ENCODE measurements at regions of chr5 and their contacts with region 1.

Region 1: GRCh38 chr5:112707187-112708102 is 30.2 kb upstream of the APC start:
- DNase-seq: peak; percentile 98 to 99
- H3K4me3 ChIP-seq: peak overlapping the region; percentile 81
- H3K4me3 Mint-ChIP-seq: peak overlapping the region; percentile 99
- H3K27ac Mint-ChIP-seq: peak overlapping the region; percentile 79
- H3K4me1 ChIP-seq: peaks cover 20% of the 10 kb centered on the region
- H3K4me1 Mint-ChIP-seq: peaks cover 33% of the 10 kb centered on the region
- H3K27me3 ChIP-seq: no peaks in the 10 kb centered on the region
- H3K27me3 Mint-ChIP-seq: peaks cover 3% of the 10 kb centered on the region
- CTCF ChIP-seq: peak in 1 of 2 experiments; percentile 8

Region 2: GRCh38 chr5:112968411-112969106 is 261.1 kb after region 1 on chr5:
- CTCF ChIA-PET with region 1: no interaction called
- POLR2A ChIA-PET with region 1: no interaction called
- intact Hi-C with region 1: loop called (anchors 5 kb)
- DNase-seq: peak; percentile 58 to 77
- H3K4me3 ChIP-seq: no peak overlapping the region
- H3K4me3 Mint-ChIP-seq: peak overlapping the region; percentile 65
- H3K27ac Mint-ChIP-seq: peak overlapping the region; percentile 94
- H3K4me1 ChIP-seq: peaks cover 56% of the 10 kb centered on the region
- H3K4me1 Mint-ChIP-seq: peaks cover 35% of the 10 kb centered on the region
- H3K27me3 ChIP-seq: no peaks in the 10 kb centered on the region
- H3K27me3 Mint-ChIP-seq: no peaks in the 10 kb centered on the region
- CTCF ChIP-seq: no peak

Region 3: DNA sequence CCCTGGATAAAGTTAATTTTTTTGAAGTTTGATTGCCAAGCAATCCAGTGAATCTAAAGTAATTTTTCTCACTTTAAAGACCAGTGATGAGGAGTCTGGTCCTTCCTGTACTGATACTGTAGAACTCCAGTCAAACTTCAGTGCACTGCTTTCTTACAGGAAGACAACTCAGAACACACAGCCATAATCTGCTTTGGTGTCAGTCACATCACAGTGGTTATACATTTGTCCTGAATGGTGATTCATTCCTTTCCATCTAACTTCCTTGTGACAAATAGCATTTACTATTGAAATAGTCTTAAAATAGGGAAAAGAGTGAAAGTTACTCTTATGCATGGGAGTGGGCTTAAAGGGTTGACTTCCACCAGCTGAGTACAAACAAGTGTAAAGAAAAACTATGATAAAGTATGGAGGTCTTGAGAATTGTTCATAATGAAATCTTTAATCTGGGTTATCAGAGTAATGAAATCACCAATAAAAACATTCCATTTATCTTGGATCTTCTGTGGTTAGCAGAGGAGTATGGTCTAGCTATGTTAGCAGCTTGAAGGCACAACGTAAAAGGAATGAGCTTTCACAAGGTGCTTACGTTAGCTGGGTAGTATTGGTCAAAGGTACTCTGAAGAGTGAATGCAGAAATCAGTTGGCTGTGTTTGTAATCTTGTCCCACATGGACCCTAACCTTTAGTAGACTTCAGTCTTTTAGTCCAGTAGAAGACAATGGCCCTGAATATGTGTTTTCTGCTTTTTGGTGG is 310.6 kb after region 1 on chr5:
- CTCF ChIA-PET with region 1: no interaction called
- POLR2A ChIA-PET with region 1: no interaction called
- intact Hi-C with region 1: no loop called
- DNase-seq: no peak
- H3K4me3 ChIP-seq: no peak overlapping the region
- H3K4me3 Mint-ChIP-seq: no peak overlapping the region
- H3K27ac Mint-ChIP-seq: no peak overlapping the region
- H3K4me1 ChIP-seq: no peaks in the 10 kb centered on the region; the same call in 1 of the 2 replicates
- H3K4me1 Mint-ChIP-seq: peaks cover 4% of the 10 kb centered on the region
- H3K27me3 ChIP-seq: no peaks in the 10 kb centered on the region
- H3K27me3 Mint-ChIP-seq: no peaks in the 10 kb centered on the region
- CTCF ChIP-seq: no peak

Measured in Caco-2 (cell line).